Mucosa of descending colon (tissue), 3 donors: ENCODE measurements at regions of chr17 and their contacts with region 1.

Region 1: GRCh38 chr17:29148790-29149430 is 31.3 kb downstream of the MYO18A start:
- DNase-seq: peak; percentile 96 to 98 (median 96)
- ATAC-seq: peak; percentile 98
- H3K4me3 ChIP-seq: peak overlapping the region; percentile 16
- H3K4me1 ChIP-seq: peaks cover 11% of the 10 kb centered on the region
- CTCF ChIP-seq: peak; percentile 98

Region 2: DNA sequence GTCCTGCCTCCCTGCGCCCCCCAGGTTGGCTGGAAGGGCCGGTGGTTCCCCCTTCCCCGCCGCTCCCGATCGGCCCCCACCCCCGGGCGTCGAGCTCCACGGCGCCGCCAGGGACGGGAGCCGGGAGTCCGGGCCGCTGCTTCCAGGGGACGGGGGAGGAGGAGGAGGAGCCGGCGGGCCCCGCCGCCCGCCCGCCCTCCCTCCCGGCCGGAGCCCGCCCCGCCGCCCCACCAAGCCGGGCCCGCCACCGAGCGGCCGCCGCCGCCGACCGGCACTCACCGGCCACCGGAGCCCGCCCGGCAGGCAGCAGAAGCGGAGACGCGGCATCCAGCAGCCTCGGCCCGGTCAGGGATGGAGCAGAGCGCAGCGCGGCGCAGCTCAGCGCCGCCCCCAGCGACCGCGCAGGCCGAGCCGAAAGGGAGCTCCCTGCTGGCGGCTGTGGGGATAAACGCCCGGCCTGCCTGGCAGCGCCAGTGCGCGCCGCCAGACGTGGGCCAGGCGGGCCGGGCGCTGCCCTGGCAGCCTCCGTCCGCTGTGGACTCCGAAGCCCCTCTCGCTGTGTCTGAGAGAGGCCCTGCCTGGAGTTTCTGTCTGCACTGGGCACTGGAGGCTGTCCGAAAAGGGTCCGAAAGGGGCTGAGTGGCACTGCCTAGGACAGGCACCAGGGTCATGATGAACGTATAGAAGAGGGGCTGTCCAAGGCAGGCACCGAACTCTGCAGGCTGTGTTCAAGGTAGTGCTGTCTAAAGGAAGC is 31.3 kb after region 1 on chr17 and contains the start of gene MYO18A:
- intact Hi-C with region 1: loop called in 1 of 2 experiments (anchors 5 kb)
- DNase-seq: peak; percentile 84 to 92 (median 86)
- ATAC-seq: peak; percentile 75
- H3K4me3 ChIP-seq: peak within 1 kb of the TSS; percentile 34
- H3K4me1 ChIP-seq: peaks cover 29% of the 10 kb centered on the region
- CTCF ChIP-seq: peak; percentile 87
- total RNA-seq, gene MYO18A: 84.9 to 111 (median 93.3) TPM

Region 3: GRCh38 chr17:29209073-29209472 is 60.2 kb after region 1 on chr17:
- intact Hi-C with region 1: no loop called
- DNase-seq: no peak
- ATAC-seq: no peak
- H3K4me3 ChIP-seq: no peak overlapping the region
- H3K4me1 ChIP-seq: no peaks in the 10 kb centered on the region
- CTCF ChIP-seq: no peak

Region 4: GRCh38 chr17:29219378-29220047 is 70.6 kb after region 1 on chr17:
- intact Hi-C with region 1: loop called (anchors 5 kb)
- DNase-seq: peak in 2 of 3 donors; percentile 64 to 90
- ATAC-seq: peak; percentile 82
- H3K4me3 ChIP-seq: no peak overlapping the region
- H3K4me1 ChIP-seq: peaks cover 7% of the 10 kb centered on the region
- CTCF ChIP-seq: peak; percentile 61